ENCODE measurements at regions of chr12 and their contacts with region 1.

Region 1: DNA sequence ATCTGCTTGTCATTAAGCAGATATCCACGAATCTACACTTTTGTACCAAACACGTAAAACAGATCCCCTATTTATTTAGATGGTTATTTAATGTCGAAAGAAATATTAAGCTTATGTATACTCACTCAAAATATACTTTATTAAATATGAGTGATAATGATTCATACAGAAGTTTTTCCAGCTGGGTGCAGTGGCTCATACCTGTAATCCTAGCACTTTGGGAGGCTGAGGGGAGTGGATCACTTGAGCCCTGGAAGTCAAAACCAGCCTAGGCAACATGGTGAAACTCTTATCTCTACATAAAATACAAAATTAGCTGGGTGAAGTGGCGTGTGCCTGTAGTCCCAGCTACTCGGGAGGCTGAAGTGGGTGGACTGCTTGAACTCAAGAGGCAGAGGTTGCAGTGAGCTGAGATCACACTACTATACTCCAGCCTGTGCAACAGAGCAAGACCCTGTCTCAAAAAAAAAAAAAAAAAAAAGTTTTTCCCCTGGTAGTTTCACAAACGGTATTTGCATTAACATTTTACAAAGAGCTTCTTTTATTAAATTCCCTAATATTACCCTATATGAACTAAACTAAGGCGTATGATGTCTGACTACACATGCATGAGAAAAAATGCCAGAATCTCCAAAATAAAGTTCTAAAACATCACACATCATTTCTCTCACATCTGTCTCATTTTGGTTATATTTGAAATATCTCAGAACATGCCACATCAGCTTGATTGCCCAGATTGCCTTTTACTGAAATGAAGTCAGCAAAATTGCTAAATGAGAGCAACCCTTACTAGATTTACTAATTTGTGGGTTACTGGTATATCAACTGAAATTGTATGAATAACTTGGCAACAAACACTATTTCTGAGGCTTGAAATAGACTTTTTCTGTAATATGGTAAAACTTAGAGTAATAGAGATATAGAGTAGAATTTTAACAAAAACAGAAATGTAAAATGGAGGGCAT is 74.9 kb downstream of the PAWR start:
- DNase-seq: peak; percentile 56
- H3K4me3 ChIP-seq: no peak overlapping the region
- H3K27ac ChIP-seq: no peak overlapping the region
- H3K4me1 ChIP-seq: peaks cover 18% of the 10 kb centered on the region
- H3K27me3 ChIP-seq: no peaks in the 10 kb centered on the region
- CTCF ChIP-seq: no peak

Region 2: DNA sequence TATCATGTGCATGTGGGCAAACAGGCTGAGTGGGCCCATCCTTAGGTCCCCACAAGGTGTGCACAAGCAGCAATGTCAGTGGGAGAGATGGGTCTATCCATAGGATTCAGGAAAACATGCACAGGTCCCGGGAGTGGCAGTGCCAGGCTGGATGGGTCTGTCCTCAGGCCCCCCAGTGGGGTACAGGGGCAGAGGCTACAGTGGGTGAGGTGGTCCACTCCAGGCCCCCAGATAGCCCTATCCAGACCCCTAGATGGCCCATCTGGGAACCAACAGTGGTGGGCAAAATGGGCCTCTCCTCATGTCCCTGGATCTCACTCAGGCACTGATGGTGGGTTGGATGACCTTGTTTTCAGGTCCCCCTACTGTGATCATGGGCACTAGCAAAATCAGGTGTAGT is 1029.1 kb before region 1 on chr12:
- CTCF ChIA-PET with region 1: no interaction called
- dilution Hi-C with region 1: no loop called
- in situ Hi-C with region 1: no loop called
- intact Hi-C with region 1: no loop called
- DNase-seq: no peak
- H3K4me3 ChIP-seq: no peak overlapping the region
- H3K27ac ChIP-seq: no peak overlapping the region
- H3K4me1 ChIP-seq: no peaks in the 10 kb centered on the region
- H3K27me3 ChIP-seq: no peaks in the 10 kb centered on the region
- CTCF ChIP-seq: no peak

Region 3: DNA sequence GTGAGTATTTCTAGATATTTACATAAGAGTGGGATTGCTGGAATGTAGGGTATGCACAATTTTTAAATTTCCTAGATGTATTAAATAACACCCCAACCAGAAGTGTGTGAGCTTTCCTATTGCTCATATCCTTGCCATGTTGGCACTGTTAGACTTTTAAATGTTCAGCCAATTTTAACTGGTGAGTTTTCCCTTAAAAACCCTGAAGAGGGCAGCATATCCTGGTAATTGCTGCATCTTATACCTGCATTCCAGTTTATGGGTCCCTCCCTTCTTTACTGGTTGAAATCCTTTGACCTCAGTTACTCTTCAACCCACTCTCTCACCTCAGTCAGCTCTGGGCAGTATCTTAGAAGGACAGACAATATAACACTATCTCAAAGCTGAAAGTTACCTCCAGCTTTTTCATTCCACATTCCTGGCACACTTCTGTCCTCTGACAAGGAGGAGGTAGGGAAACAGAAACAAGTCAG is 195.7 kb before region 1 on chr12:
- CTCF ChIA-PET with region 1: no interaction called
- dilution Hi-C with region 1: no loop called
- in situ Hi-C with region 1: no loop called
- intact Hi-C with region 1: no loop called
- DNase-seq: peak; percentile 76
- H3K4me3 ChIP-seq: no peak overlapping the region
- H3K27ac ChIP-seq: peak overlapping the region; percentile 55
- H3K4me1 ChIP-seq: peaks cover 58% of the 10 kb centered on the region
- H3K27me3 ChIP-seq: no peaks in the 10 kb centered on the region
- CTCF ChIP-seq: peak; percentile 51 to 70

Region 4: DNA sequence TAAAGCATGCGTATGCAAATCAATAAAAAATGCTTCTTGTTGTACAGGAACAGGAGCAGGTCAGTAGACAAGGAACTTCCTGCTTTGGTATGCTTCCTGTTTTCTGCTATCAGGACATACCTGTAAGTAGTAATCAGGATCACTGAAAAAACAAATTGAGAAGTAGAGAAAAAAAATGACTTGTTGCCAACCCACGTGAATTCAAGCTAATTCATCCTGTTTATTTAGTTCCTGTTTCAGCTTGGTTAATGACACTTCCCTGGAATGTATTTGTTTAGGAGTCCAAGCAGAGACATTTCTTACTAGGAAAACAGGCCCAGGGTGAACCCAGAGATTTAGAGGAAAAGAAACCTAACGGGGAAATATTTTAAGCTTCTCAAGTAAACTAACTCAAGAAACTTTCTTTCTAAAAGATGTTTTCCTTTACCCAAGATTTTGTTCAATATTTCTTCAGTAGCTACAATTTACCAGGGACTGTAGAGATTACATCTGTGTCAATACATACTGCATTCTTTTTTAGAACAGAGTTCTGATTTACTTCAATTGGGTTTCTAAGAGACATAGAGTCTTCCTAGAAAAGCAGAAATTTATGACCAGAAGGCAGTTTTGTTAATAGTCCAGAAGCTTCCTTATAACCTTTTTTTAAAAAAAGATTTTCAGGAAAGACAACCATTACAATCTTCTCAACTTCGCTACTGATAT is 49.3 kb before region 1 on chr12:
- CTCF ChIA-PET with region 1: no interaction called
- dilution Hi-C with region 1: loop called (anchors 5 kb)
- in situ Hi-C with region 1: no loop called
- intact Hi-C with region 1: no loop called
- DNase-seq: peak; percentile 24
- H3K4me3 ChIP-seq: no peak overlapping the region
- H3K27ac ChIP-seq: no peak overlapping the region
- H3K4me1 ChIP-seq: peaks cover 6% of the 10 kb centered on the region
- H3K27me3 ChIP-seq: no peaks in the 10 kb centered on the region
- CTCF ChIP-seq: no peak

Region 5: DNA sequence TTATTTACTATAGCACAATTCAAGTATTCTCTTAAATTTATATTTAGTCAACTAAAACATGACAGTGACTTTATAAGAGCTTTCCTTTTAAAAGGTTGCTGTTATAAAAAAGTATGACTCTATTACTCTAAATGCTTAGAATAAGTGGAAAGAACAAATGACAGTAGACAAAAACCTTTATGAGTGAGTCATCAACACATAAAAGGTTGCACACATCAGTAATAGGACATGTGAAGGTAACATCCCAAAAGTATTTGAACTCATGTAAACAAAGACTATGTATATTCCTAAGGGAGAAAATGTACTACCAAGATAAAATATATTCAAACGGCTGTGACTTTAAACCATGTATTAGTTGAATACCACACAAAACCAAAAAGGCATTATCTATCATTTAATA is 23.9 kb before region 1 on chr12:
- CTCF ChIA-PET with region 1: no interaction called
- dilution Hi-C with region 1: no loop called
- in situ Hi-C with region 1: no loop called
- intact Hi-C with region 1: no loop called
- DNase-seq: peak; percentile 8
- H3K4me3 ChIP-seq: no peak overlapping the region
- H3K27ac ChIP-seq: no peak overlapping the region
- H3K4me1 ChIP-seq: no peaks in the 10 kb centered on the region
- H3K27me3 ChIP-seq: no peaks in the 10 kb centered on the region
- CTCF ChIP-seq: no peak

Region 6: DNA sequence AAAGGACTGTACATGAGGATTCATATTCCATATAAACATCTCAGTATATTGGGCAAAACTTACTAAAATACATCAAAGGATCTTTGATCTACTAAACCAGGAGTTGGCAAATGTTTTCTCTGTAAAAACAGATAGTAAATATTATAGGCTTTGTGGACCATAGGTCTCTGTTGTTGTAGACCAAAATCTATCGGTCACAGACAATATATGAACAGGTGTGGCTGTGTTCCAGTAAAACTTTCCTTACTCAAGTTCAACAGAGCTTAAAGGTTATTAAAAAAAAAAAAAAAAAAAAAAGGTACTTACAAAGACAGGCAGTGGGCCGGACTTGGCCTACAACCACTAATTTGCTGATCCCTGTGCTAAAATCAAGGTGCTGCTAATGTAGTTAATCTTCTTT is 34.6 kb after region 1 on chr12:
- CTCF ChIA-PET with region 1: no interaction called
- dilution Hi-C with region 1: loop called (anchors 5 kb)
- in situ Hi-C with region 1: no loop called
- intact Hi-C with region 1: no loop called
- DNase-seq: no peak
- H3K4me3 ChIP-seq: no peak overlapping the region
- H3K27ac ChIP-seq: no peak overlapping the region
- H3K4me1 ChIP-seq: no peaks in the 10 kb centered on the region
- H3K27me3 ChIP-seq: no peaks in the 10 kb centered on the region
- CTCF ChIP-seq: no peak

Region 7: GRCh38 chr12:80118565-80119324 is 502.9 kb after region 1 on chr12:
- CTCF ChIA-PET with region 1: no interaction called
- dilution Hi-C with region 1: no loop called
- in situ Hi-C with region 1: no loop called
- intact Hi-C with region 1: no loop called
- DNase-seq: no peak
- H3K4me3 ChIP-seq: no peak overlapping the region
- H3K27ac ChIP-seq: no peak overlapping the region
- H3K4me1 ChIP-seq: no peaks in the 10 kb centered on the region
- H3K27me3 ChIP-seq: no peaks in the 10 kb centered on the region
- CTCF ChIP-seq: no peak

Measured in mammary epithelial cell (primary cell).